ENCODE measurements at regions of chr1 and their contacts with region 1.

Region 1: DNA sequence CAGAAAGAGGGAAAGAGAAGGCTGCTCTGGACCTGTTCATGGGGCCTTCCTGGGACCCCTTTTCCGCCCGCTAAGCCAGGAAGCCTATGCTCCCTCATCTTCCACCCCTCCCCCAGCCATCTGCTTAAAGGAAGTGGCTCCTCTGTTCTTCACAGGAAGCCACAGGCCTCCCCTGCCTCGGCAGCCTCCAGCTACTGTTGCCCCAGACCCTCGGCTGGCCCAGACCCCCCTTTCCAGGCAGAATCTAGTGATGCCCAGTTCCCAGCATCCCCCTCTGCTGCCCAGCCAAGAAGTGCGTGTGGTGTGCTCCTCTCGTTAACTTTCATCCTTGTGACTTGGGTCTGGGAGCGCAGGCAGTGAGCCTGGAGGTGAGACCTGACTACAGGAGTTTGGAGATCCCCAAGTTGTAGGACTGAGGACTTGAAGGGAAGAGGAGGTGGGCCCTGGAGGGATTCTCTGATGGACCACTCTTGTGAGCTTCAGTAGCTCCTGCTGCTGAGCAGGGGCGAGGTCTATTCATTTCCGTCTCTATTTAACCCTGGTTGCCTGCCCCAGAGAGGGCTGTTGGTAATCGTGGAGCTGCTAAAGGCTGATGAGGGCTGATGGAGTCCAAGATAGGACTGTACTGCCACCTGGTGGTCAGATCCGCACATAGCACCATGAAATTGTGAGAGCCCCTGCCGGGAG is 9.1 kb downstream of the IFI6 start:
- DNase-seq: peak; percentile 38 to 96 (median 88)

Region 2: DNA sequence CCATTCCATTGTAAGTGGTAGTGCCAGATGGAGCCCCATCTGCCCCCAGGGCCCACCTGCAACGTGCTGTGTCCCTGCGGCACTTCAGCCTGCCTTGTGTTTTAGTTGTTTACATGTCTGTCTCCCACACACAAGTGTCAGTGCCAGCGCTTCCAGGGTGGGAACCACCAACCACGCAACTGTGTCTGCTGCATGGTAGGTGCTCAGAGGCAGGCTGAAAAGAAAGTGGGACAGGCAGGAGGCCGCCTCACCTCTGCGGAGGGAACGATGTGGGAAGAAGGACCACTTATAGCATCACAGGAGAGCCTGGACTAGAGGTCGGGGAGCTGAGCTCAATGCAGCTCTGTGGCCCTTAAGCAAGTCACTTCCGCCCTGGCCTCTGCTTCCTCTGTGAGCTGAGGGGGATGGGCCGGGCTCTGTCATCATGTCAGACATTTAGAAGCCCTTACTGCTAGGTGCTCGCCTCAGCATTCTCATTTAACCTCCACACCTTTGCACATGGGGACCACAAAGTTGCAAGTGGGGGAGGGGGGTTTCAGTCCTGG is 525.8 kb before region 1 on chr1:
- intact Hi-C with region 1: no loop called
- DNase-seq: peak in 18 of 42 donors; percentile 29 to 74 (median 56)

Region 3: DNA sequence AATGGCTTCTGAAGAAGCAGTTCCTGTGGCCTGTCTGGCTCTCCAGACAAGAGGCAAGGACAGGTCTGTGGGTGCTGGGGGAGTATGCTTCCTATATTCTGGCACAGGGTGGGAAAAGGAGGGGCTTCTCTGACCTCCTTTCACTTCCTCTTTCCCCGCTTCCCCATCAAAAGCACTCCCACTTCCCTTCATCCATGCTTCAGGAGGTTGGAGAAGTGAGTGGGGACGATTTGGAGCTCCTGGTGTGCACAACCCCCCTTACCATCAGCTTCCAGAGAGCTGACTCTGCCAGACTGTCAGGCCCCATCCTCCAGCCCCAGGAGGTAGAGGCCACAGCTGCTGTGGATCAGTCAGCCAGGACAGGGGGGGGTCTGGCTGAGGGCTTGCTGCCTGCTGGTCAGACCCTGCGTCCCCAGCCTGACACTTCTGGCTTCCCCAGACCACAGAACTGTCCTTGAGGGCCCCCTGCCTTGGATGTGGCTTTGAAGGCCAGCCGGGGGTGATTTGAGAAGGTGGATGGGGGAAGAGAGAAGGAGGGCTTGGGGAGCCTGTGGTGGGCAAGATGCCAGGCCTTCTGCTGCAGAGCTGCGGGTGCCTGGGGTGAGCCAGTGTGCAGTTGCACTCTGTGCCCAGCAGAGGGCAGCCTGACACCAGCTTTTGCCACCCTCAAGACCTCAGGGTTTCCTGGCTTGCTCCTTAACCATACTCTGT is 362.4 kb before region 1 on chr1:
- intact Hi-C with region 1: loop called (anchors 10 kb)
- DNase-seq: peak; percentile 64 to 93 (median 87)

Region 4: DNA sequence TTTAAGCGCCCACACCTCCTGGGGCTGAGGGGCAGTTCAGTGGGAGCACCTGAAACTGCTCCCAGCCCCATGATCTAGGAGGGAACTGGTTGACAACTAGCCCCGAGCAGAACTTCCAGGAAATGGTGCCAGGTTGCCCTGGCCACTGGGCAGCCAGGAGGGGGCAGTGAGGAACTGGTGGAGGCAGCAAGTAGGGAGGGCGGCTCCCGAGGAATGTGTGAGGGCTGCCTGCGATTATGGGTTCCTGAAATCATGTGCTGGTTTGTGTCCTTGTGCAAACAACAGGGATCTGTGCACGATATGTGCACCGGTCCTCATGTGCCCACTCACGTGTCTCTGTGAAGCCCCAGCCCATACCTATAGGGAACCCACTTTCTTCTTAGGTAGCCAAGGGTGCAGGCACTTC is 260.5 kb before region 1 on chr1:
- intact Hi-C with region 1: loop called (anchors 10 kb)
- DNase-seq: peak; percentile 42 to 84 (median 71)

Region 5: DNA sequence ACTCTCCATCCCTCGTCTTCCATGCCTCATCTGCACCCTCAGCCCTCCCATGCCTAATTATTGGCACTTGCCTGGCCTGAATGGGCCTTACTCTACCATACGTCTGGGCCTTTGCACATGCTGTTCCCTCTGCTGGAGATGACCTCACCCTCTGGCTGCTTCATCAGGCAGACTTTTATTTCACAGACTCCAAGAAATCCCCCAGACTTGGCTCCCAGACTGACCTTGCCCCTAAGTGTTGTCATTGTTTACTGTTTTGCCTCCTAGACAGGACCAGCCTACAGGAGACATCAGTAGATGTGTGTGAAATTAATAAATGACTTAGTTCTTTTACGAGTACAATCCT is 53.7 kb before region 1 on chr1:
- intact Hi-C with region 1: loop called (anchors 2 kb)
- DNase-seq: no peak

Region 6: GRCh38 chr1:27858072-27858958 is 195.5 kb after region 1 on chr1:
- intact Hi-C with region 1: no loop called
- DNase-seq: peak; percentile 66 to 96 (median 91)